ENCODE measurements at regions of chr6 and their contacts with region 1.

Region 1: DNA sequence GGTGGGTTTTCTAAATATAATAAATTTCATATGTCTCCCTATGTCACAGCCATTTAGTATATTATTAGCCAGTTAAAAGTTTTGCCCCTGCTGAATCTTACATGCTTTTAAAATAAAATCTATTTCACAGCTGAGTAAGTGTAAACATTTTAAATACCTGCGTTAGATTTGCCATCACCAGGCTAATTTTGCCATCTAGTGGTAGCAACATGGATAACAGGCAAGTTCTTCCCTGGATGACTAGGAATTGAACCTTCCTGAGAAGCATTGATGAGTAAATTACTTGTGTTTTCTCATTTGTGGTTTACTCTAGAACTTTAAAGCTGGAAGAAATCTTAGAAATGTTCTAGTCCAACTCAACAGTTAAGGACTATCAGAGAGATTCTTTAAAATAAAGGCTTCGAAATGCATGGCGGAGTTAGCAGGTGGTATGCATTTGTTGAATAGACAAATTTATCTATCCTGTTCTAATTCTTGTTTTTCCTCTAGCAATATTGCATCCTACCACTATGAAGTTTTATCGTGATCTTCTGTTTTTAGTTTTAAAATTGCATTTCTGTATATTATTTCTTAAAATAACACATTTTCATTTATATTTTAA is 2.6 kb downstream of the PRSS35 start:
- DNase-seq: peak; percentile 78
- H3K4me3 ChIP-seq: peak overlapping the region; percentile 64
- H3K27ac ChIP-seq: peak overlapping the region; percentile 75
- H3K4me1 ChIP-seq: peaks cover 46% of the 10 kb centered on the region
- H3K27me3 ChIP-seq: no peaks in the 10 kb centered on the region
- CTCF ChIP-seq: peak; percentile 82

Region 2: DNA sequence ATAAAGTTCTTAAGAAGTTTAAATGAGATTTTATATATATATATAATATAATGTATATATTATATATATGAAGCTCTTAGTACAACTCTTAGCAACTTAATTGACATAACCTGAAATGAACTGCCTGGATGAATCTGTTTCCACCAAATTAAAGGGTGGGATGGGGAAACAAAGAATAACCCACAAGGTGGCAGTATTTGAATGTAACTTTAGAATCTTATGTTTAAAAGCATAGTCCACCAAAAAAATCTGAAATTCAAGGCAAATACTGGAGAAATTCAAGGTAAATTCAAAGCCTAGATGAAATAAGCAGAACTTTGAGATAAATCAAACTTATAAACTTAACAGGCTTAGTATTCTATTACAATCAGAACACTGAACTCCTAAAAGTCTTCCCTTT is 1263.0 kb before region 1 on chr6:
- CTCF ChIA-PET with region 1: no interaction called
- POLR2A ChIA-PET with region 1: no interaction called
- intact Hi-C with region 1: loop called (anchors 10 kb)
- DNase-seq: peak; percentile 79
- H3K4me3 ChIP-seq: no peak overlapping the region
- H3K27ac ChIP-seq: no peak overlapping the region
- H3K4me1 ChIP-seq: peaks cover 19% of the 10 kb centered on the region
- H3K27me3 ChIP-seq: no peaks in the 10 kb centered on the region
- CTCF ChIP-seq: peak; percentile 60

Region 3: GRCh38 chr6:83067448-83068413 is 447.2 kb before region 1 on chr6 and contains the start of gene DOP1A:
- CTCF ChIA-PET with region 1: interaction called, 14 read pairs
- POLR2A ChIA-PET with region 1: no interaction called
- intact Hi-C with region 1: loop called (anchors 2 kb)
- DNase-seq: peak; percentile 98
- H3K4me3 ChIP-seq: peak within 1 kb of the TSS; percentile 91
- H3K27ac ChIP-seq: peak within 1 kb of the TSS; percentile 80
- H3K4me1 ChIP-seq: peaks cover 25% of the 10 kb centered on the region
- H3K27me3 ChIP-seq: no peaks in the 10 kb centered on the region
- CTCF ChIP-seq: peak; percentile 99
- total RNA-seq, gene DOP1A: 25.1 and 31.9 TPM in 2 replicates

Region 4: DNA sequence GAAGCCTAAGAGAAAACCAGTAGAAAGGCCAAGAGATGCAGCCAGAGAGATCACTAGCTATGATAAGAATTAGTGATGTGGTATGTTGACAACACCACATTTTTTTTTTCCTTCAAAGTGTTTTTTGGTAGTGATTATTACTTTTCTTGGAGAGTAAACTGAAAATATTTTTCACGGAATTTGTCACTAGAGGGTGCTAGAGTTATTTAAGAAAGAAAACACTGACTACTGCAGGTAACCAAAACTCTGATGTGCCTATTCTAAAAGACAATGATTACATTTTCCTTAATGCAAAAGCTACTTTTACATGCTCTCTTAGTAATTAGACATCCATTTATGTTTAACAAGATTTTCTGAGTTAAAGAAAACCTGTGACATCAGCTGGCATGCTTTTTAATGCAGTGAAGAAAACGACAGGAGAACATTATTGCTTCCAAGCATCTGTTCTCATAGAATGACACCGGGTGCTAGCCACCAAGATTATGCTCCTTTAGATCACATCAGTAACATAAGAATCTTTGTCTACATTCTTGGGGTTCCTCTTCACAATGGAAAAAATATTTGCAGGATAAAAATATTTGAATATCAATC is 293.0 kb before region 1 on chr6:
- CTCF ChIA-PET with region 1: interaction called, 7 read pairs
- POLR2A ChIA-PET with region 1: no interaction called
- intact Hi-C with region 1: loop called (anchors 1 kb)
- DNase-seq: peak; percentile 82
- H3K4me3 ChIP-seq: no peak overlapping the region
- H3K27ac ChIP-seq: peak overlapping the region; percentile 70
- H3K4me1 ChIP-seq: peaks cover 39% of the 10 kb centered on the region
- H3K27me3 ChIP-seq: no peaks in the 10 kb centered on the region
- CTCF ChIP-seq: peak; percentile 72

Region 5: GRCh38 chr6:83365931-83366330 is 149.0 kb before region 1 on chr6:
- CTCF ChIA-PET with region 1: interaction called, 3 read pairs
- POLR2A ChIA-PET with region 1: no interaction called
- intact Hi-C with region 1: loop called (anchors 1 kb)
- DNase-seq: peak; percentile 78
- H3K4me3 ChIP-seq: no peak overlapping the region
- H3K27ac ChIP-seq: peak overlapping the region; percentile 95
- H3K4me1 ChIP-seq: peaks cover 56% of the 10 kb centered on the region
- H3K27me3 ChIP-seq: no peaks in the 10 kb centered on the region
- CTCF ChIP-seq: no peak

Region 6: DNA sequence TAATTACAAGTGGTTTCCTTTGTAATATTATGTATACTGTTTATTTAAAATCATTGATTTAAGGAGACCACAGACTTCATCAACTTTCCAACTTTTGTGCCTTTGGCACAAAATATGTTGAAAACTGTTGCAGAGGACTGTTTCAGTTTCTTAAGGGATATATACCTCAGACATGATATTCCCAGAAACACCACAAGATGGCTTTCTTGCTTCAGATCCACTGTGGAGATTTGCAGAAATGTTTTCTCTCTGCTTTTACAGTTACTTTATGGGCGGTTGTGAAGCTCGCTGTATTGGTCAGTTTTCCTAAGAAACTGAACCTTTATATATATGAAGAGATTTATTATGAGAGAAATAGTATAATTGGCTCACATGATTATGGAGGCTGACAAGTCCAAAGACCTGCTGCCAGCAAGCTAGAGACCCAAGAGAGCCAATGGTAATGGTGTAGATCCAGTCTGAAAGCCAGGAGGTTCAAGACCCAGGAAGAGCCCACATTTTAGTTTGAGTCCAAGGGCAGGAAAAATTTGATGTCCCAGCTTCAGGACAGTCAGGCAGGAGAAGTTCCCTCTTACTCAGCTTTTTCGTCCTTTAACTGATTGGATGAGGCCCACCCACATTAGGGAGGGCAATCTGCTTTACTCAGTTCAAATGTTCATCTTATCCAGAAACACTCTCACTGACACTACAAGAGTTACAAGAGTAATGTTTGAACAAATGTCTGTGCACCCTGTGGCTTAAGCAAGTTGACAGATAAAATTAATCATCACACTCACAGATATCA is 96.9 kb before region 1 on chr6:
- CTCF ChIA-PET with region 1: interaction called, 7 read pairs
- POLR2A ChIA-PET with region 1: no interaction called
- intact Hi-C with region 1: loop called (anchors 1 kb)
- DNase-seq: peak; percentile 77
- H3K4me3 ChIP-seq: no peak overlapping the region
- H3K27ac ChIP-seq: peak overlapping the region; percentile 39
- H3K4me1 ChIP-seq: peaks cover 14% of the 10 kb centered on the region
- H3K27me3 ChIP-seq: no peaks in the 10 kb centered on the region
- CTCF ChIP-seq: peak; percentile 73

Region 7: GRCh38 chr6:83474309-83474708 is 40.7 kb before region 1 on chr6:
- CTCF ChIA-PET with region 1: no interaction called
- POLR2A ChIA-PET with region 1: no interaction called
- intact Hi-C with region 1: no loop called
- DNase-seq: peak; percentile 10
- H3K4me3 ChIP-seq: no peak overlapping the region
- H3K27ac ChIP-seq: no peak overlapping the region
- H3K4me1 ChIP-seq: no peaks in the 10 kb centered on the region
- H3K27me3 ChIP-seq: no peaks in the 10 kb centered on the region
- CTCF ChIP-seq: no peak

Region 8: GRCh38 chr6:84249724-84250123 is 734.8 kb after region 1 on chr6:
- CTCF ChIA-PET with region 1: no interaction called
- POLR2A ChIA-PET with region 1: no interaction called
- intact Hi-C with region 1: no loop called
- DNase-seq: peak; percentile 47
- H3K4me3 ChIP-seq: no peak overlapping the region
- H3K27ac ChIP-seq: no peak overlapping the region
- H3K4me1 ChIP-seq: no peaks in the 10 kb centered on the region
- H3K27me3 ChIP-seq: peaks cover 3% of the 10 kb centered on the region
- CTCF ChIP-seq: no peak

Measured in A673 (cell line).